ENCODE measurements at regions of chr15 and their contacts with region 1.

Region 1: DNA sequence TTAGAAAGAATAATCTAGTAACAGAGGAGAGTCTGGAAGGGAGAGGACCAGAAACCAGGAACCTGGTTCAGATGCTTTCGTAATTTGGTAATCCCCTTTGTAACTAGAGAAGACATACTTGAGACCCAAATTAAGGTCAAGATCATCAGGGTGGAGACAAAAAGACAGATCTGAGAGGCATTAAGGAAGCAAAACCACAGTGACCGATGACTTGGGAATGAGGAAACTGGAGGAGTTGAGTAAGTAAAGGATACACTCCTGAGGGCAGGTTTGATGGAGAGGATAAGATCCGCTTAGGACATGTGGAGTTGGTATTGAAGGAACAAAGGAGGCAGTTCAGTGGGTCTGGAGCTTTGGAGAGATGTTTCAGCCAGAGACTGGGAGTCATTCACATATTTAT is 23.6 kb upstream of the BCL2A1 start:
- DNase-seq: no peak
- H3K4me3 ChIP-seq: no peak overlapping the region
- H3K4me3 Mint-ChIP-seq: no peak overlapping the region
- H3K27ac ChIP-seq: no peak overlapping the region
- H3K27ac Mint-ChIP-seq: no peak overlapping the region
- H3K4me1 ChIP-seq: no peaks in the 10 kb centered on the region
- H3K4me1 Mint-ChIP-seq: peaks cover 3 to 5% (median 3%) of the 10 kb centered on the region in 3 donors
- H3K27me3 ChIP-seq: no peaks in the 10 kb centered on the region
- H3K27me3 Mint-ChIP-seq: peaks cover 5 to 9% of the 10 kb centered on the region in 2 donors

Region 2: DNA sequence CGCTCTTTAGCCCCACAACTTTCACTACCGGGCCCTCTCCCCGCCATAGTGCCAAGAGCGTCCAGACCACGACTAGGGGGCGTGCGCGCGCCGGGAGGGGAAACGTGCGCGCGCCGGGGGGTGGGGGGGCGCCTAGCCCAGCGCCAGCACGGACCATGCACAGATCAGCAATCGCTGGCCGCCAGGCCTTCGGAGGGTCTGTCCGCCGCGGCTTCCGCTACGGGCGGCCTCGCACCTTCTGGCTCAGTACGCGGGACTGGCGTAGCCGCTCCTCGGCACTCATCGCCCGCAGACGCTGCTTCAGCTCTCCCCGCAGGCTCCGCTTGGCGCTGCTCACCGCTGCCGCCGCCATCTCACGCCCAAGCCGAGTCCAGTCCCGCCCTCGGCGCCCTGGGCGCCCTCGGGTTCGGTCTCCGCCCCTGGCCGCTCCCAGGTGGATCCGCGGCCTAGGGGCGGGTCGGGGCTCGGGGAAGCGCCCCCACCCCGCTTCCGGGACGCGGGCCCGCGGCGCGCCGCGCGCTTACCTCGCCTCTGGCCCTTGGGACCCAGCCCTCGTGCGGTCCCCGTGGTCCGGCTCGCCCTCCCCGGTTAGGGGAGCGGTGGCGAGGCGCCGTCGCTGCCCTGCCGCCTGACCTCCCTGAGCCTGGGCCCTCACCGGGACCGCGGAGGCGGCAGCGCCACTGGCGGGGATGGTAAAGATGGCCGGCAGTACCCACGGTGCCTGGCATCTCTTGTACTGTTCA is 97.8 kb before region 1 on chr15 and contains the start of gene MTHFS:
- CTCF ChIA-PET with region 1: interaction called, 21 read pairs
- POLR2A ChIA-PET with region 1: interaction called, 7 read pairs
- DNase-seq: peak; percentile 62 to 87 (median 83)
- H3K4me3 ChIP-seq: peak within 1 kb of the TSS; percentile 66
- H3K4me3 Mint-ChIP-seq: peak within 1 kb of the TSS; percentile 94 to 100 (median 98)
- H3K27ac ChIP-seq: peak within 1 kb of the TSS; percentile 93
- H3K27ac Mint-ChIP-seq: peak within 1 kb of the TSS; percentile 95 to 100 (median 100)
- H3K4me1 ChIP-seq: peaks cover 29% of the 10 kb centered on the region
- H3K4me1 Mint-ChIP-seq: peaks cover 35 to 46% (median 40%) of the 10 kb centered on the region in 3 donors
- H3K27me3 ChIP-seq: no peaks in the 10 kb centered on the region
- H3K27me3 Mint-ChIP-seq: no peaks in the 10 kb centered on the region
- total RNA-seq, gene MTHFS: 30.2 to 31.1 TPM